BJ (cell line): ENCODE measurements at regions of chr10 and their contacts with region 1.

Region 1: DNA sequence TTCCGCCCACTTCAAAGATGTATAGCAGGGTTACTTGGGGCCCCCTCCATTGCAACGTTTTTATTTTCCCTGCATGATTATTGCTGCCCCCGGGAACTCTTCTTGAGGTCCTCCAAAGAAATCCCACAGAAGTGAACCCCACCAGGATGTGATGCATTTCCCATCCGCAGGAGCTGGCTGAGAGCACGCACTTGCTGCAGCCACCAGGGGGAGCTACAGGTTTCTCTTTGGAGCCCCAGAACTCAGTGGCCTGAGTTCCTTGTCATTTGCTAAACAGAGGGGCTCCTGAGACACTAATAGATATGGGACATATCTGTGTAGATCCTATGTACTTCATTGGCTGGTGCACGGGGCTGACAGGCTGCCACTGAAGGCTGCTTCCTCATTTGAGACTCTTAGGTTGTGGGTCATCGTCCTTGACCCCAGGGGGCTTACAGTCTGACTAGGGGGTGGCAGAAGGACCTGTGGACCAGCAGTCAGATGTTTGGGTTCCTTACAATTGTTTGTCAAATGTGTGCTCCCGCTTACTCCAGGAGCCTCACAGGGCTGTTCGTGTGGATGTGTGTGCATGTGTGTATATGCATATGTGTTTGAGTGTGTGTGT is 52.3 kb upstream of the ENO4 start:
- DNase-seq: no peak
- H3K4me3 ChIP-seq: no peak overlapping the region
- H3K27me3 ChIP-seq: no peaks in the 10 kb centered on the region
- CTCF ChIP-seq: peak; percentile 94

Region 2: DNA sequence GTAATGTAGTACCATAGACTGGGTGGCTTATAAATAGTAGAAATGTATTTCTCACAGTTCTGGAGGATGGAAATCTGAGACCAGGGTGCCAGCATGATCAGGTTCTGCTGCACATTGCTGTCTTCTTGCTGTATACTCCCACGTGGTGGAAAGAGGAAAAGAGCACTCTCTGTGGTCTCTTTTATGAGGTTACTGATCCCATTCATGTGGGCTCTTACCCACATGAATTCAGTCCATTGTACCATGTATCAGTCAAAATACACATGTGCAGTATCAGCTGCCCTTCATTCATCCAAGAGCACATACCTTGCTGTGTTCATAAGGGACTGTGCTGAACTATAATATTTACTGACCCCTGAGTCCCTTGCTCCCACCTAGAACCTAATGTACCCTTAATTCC is 159.2 kb before region 1 on chr10:
- CTCF ChIA-PET with region 1: no interaction called
- POLR2A ChIA-PET with region 1: no interaction called
- DNase-seq: no peak
- H3K4me3 ChIP-seq: no peak overlapping the region
- H3K27me3 ChIP-seq: no peaks in the 10 kb centered on the region
- CTCF ChIP-seq: no peak

Region 3: DNA sequence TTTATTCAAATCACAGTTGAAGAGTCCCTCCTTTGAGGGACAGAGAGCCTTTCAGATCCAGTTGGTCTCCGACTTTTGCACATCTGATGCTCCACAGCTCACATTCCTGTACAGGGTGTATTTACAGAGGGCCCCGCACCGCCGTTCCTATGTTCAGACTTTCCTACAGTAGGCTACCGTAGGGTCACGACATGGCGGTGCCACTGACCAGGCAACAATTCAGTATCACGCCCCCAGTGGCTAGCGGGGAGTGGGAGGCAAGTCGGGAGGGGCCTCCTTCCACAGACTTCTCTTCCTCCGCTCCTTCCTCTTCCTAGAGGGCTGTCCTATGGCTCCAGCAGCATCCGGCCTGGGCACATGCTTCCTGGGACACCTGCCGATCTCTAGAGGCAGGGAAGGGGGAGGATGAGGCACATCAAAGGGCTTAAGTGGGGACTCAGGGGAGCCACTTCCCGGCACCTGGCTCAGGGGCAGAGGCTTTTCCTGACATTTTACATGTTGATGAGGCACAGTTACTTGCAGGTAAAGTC is 11.8 kb after region 1 on chr10:
- CTCF ChIA-PET with region 1: interaction called, 28 read pairs
- POLR2A ChIA-PET with region 1: no interaction called
- DNase-seq: no peak
- H3K4me3 ChIP-seq: no peak overlapping the region
- H3K27me3 ChIP-seq: no peaks in the 10 kb centered on the region
- CTCF ChIP-seq: no peak

Region 4: DNA sequence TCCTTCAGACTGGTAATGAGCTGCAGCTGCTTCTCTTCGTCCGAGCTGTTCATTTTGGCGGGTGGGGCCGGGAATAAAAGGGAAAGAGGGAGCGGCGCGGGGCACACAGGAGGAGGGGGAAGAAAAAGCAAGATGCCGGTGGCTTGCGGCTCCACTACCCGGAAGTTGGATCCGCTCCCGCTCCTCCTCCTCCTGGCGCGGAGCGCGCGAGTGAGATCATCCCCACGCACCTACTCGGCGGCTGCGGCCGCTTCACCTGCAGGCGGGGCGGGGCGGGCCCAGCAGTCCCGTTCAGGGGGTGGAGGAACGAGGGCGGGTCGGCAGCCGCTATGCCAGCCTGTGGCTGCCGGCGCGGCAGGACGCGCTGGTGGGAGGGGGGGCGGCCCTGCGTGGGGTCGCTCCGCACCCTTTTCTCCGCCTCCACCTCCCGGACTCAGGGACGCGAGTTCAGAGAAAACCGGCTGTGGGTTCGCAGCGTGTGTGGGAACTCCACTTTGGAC is 208.1 kb after region 1 on chr10 and contains the start of gene SHTN1:
- CTCF ChIA-PET with region 1: no interaction called
- POLR2A ChIA-PET with region 1: no interaction called
- DNase-seq: no peak
- H3K4me3 ChIP-seq: peak within 1 kb of the TSS; percentile 87
- H3K27me3 ChIP-seq: no peaks in the 10 kb centered on the region
- CTCF ChIP-seq: no peak
- polyA plus RNA-seq, gene SHTN1: 2.8 and 5.0 TPM in 2 replicates

Region 5: GRCh38 chr10:117162093-117163021 is 365.3 kb after region 1 on chr10:
- CTCF ChIA-PET with region 1: interaction called, 736 read pairs
- POLR2A ChIA-PET with region 1: no interaction called
- DNase-seq: no peak
- H3K4me3 ChIP-seq: peak overlapping the region; percentile 12; the same call in 1 of the 2 replicates
- H3K27me3 ChIP-seq: peaks cover 32% of the 10 kb centered on the region
- CTCF ChIP-seq: no peak

Region 6: GRCh38 chr10:117271427-117271826 is 474.4 kb after region 1 on chr10:
- CTCF ChIA-PET with region 1: no interaction called
- POLR2A ChIA-PET with region 1: no interaction called
- DNase-seq: no peak
- H3K4me3 ChIP-seq: no peak overlapping the region
- H3K27me3 ChIP-seq: no peaks in the 10 kb centered on the region
- CTCF ChIP-seq: no peak